Breast epithelium (tissue), 4 donors: ENCODE measurements at regions of chr12 and their contacts with region 1.

Region 1: DNA sequence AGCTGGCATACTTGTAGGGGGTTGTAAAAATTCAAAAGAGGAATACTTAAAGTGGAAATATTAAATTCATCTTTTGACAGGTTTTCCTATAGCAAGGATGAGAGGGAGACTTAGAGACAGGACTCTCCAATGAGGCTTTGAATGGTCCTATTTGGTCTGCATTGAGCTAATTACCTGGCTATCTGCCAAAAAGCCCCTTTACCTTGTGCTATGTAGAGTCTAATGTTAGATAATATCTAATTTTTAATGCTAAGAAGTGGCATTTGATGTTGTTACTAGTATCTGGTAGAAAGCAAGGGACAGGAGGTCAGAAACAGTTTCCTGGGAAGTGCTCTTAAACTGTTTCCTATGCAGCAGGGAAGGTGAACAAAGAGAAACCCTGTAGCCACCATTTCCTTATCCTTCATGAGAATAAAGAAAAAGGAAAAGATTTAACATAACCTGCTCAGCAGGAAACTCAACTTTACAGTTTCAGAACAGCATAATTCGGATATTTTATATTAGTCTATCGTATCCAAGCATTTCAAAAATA is 550.0 kb downstream of the SOX5 start:
- DNase-seq: no peak
- H3K4me3 ChIP-seq: no peak overlapping the region
- H3K27ac ChIP-seq: no peak overlapping the region
- H3K4me1 ChIP-seq: no peaks in the 10 kb centered on the region
- H3K27me3 ChIP-seq: no peaks in the 10 kb centered on the region
- CTCF ChIP-seq: no peak
- POLR2A ChIP-seq: no peak

Region 2: DNA sequence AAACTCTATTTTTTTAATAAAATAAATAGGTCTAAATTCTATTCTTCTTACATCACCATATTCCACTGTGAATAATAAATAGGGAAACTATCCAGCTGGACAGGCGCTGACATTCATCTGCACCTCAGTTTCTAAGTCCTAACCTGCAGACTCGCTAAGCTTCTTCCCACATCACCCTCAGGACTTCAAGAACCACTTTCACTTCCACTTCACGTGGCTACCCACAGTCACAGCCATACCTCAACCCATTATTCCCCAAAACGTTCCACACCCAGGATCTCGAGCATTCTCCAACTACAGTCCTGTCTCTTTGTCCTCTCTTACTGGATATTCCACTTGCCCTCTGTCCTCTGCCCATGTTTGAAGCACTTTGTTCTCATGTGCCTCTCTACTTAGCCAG is 926.3 kb before region 1 on chr12:
- intact Hi-C with region 1: no loop called
- DNase-seq: no peak
- H3K4me3 ChIP-seq: no peak overlapping the region
- H3K27ac ChIP-seq: no peak overlapping the region
- H3K4me1 ChIP-seq: no peaks in the 10 kb centered on the region
- H3K27me3 ChIP-seq: no peaks in the 10 kb centered on the region
- CTCF ChIP-seq: no peak
- POLR2A ChIP-seq: no peak

Region 3: DNA sequence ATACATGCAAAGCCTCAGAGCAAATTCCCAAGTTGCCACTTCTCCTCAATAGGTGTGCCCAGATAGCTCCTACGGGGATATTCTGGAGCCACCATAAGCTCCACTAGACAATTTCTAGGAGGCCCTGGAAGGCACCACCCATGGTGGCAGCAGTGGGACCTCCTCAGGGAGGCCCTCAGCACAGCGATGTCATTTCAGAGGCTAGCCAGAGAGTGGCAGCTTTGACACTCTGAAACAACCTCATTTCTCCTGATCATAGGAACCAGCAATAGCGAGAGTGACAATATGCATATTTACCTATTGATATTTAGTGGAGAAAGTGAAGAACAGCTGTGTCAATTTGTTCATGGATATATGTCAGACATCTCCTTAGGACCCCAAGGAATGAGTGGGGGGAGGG is 62.3 kb before region 1 on chr12:
- intact Hi-C with region 1: loop called (anchors 5 kb)
- DNase-seq: no peak
- H3K4me3 ChIP-seq: no peak overlapping the region
- H3K27ac ChIP-seq: no peak overlapping the region
- H3K4me1 ChIP-seq: no peaks in the 10 kb centered on the region
- H3K27me3 ChIP-seq: no peaks in the 10 kb centered on the region
- CTCF ChIP-seq: no peak
- POLR2A ChIP-seq: no peak